Posterior vena cava (tissue), 2 donors: ENCODE measurements at regions of chr9 and their contacts with region 1.

Region 1: GRCh38 chr9:80538976-80539375 is 967.2 kb downstream of the TLE4 start:
- DNase-seq: no peak

Region 2: DNA sequence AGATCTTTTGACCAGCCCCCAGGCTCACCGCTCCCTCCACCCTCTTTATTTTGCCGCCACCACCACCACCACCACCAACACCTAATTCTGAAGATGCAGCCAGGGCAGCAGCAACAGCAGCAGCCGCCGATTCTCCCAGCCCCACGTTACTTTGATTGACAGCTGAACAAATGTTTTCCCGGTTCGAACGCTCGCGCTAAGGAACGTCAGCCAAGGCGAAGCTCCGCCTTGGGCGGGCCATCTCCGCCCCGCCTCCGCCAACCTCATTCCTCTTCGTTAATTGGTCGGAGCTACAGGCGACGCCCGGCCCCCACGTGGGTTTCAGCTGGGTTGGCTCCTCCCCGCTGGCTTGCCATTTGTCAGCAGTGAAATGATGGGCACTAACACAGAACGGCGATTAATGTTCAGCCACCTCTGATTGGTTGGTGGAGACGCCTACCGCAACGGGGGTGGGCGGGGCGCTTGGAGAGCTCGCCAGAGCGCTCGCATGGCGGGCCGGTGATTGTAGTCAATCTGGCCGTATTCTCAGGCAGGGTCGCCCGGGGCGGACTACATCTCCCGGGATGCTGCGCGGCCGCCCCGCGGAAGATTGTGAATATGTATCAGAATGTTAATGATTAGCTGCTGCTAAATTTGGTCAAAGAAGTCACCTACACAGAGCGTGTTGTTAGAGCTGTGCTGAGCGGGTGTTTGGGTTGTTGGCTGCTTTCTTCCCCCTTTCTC is 967.5 kb before region 1 on chr9 and contains the start of gene TLE4:
- intact Hi-C with region 1: loop called in 1 of 2 experiments (anchors 5 kb)
- DNase-seq: peak; percentile 100
- total RNA-seq, gene TLE4: 24.2 to 34.9 TPM

Region 3: DNA sequence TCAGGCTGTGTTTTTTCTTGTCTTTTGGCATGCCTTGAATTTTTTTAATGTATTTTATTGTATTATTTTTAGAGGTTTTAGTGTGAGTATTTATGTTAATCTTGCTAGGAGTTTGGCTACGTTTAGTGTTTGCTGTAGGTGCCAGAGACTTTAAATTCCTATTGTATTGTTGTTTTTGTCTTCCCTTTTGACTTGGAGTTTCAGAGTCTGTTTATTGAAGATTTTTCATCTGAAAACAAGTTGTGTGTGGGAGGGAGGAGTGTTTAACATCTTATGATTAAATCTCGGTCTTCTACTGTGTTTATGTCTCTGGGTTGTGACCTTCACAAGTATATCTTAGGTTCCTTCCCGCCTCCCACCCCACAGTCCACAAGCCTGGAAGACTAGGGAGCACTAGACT is 193.6 kb after region 1 on chr9:
- intact Hi-C with region 1: loop called in 1 of 2 experiments (anchors 10 kb)
- DNase-seq: no peak